Ascending aorta (tissue), 2 donors: ENCODE measurements at regions of chr2 and their contacts with region 1.

Region 1: GRCh38 chr2:237291138-237291792 is 122.7 kb downstream of the COL6A3 start:
- DNase-seq: peak; percentile 70 to 96
- H3K4me3 ChIP-seq: peak overlapping the region; percentile 2 to 37
- H3K27ac ChIP-seq: peak overlapping the region; percentile 75 to 76
- H3K4me1 ChIP-seq: peaks cover 0 to 22% of the 10 kb centered on the region in 2 donors
- H3K27me3 ChIP-seq: no peaks in the 10 kb centered on the region
- CTCF ChIP-seq: no peak

Region 2: GRCh38 chr2:237223201-237223861 is 67.9 kb before region 1 on chr2:
- intact Hi-C with region 1: loop called (anchors 5 kb)
- DNase-seq: peak; percentile 26 to 85
- H3K4me3 ChIP-seq: no peak overlapping the region
- H3K27ac ChIP-seq: peak overlapping the region; percentile 53 to 55
- H3K4me1 ChIP-seq: peaks cover 13 to 15% of the 10 kb centered on the region in 2 donors
- H3K27me3 ChIP-seq: no peaks in the 10 kb centered on the region
- CTCF ChIP-seq: no peak

Region 3: DNA sequence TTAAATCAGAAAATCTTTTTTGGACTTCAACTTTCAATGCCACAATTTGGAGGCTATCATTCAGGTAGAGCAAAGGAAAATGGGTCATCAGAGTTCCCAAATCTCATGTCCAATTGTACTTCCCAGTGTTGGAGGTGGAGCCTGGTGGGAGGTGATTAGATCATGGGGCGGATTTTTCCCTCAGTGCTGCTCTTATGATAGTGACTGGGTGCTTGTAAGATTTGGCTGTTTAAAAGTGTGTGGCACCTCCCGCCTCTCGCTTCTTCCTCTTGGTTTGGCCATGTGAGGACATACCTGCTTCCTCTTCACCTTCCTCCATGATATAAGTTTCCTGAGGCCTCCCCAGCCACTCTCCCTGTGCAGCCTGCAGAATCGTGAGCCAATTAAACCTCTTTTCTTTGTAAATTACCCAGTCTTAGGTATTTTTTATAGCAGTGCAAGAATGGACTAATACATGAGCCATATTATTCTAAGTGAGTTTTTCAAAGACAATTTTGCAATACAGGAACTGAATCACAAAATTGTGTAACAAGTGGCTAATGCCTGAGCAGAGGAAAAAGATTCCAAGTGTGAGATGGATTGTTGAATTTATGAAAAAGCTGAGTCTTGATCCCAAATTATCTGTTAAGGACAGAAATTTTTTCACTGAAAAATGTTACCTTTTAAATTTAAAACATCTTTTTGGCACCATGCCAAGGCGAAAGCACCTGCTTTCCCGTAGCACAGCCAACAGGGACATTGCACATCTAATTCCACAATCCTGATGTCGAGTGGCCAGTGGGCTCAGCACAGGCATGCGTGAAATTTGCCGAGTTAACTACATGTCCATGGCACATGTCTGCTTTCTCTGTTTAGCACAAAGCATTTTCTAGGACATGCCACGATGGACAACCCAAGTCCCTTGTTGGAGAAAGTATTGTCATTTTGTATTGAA is 28.2 kb before region 1 on chr2:
- intact Hi-C with region 1: loop called (anchors 2 kb)
- DNase-seq: no peak
- H3K4me3 ChIP-seq: no peak overlapping the region
- H3K27ac ChIP-seq: peak overlapping the region; percentile 1 to 43
- H3K4me1 ChIP-seq: peaks cover 0 to 13% of the 10 kb centered on the region in 2 donors
- H3K27me3 ChIP-seq: no peaks in the 10 kb centered on the region
- CTCF ChIP-seq: no peak

Region 4: GRCh38 chr2:237315170-237315828 is 24.0 kb after region 1 on chr2:
- intact Hi-C with region 1: loop called (anchors 1 kb)
- DNase-seq: peak; percentile 69 to 96
- H3K4me3 ChIP-seq: peak overlapping the region in 1 of 2 donors; percentile 26
- H3K27ac ChIP-seq: peak overlapping the region; percentile 95 to 99
- H3K4me1 ChIP-seq: peaks cover 19 to 31% of the 10 kb centered on the region in 2 donors
- H3K27me3 ChIP-seq: no peaks in the 10 kb centered on the region
- CTCF ChIP-seq: peak; percentile 43 to 77 (median 75)

Region 5: GRCh38 chr2:237354892-237355291 is 63.6 kb after region 1 on chr2:
- intact Hi-C with region 1: loop called (anchors 5 kb)
- DNase-seq: no peak
- H3K4me3 ChIP-seq: no peak overlapping the region
- H3K27ac ChIP-seq: peak overlapping the region; percentile 16 to 29
- H3K4me1 ChIP-seq: peaks cover 0 to 7% of the 10 kb centered on the region in 2 donors
- H3K27me3 ChIP-seq: no peaks in the 10 kb centered on the region
- CTCF ChIP-seq: no peak

Region 6: DNA sequence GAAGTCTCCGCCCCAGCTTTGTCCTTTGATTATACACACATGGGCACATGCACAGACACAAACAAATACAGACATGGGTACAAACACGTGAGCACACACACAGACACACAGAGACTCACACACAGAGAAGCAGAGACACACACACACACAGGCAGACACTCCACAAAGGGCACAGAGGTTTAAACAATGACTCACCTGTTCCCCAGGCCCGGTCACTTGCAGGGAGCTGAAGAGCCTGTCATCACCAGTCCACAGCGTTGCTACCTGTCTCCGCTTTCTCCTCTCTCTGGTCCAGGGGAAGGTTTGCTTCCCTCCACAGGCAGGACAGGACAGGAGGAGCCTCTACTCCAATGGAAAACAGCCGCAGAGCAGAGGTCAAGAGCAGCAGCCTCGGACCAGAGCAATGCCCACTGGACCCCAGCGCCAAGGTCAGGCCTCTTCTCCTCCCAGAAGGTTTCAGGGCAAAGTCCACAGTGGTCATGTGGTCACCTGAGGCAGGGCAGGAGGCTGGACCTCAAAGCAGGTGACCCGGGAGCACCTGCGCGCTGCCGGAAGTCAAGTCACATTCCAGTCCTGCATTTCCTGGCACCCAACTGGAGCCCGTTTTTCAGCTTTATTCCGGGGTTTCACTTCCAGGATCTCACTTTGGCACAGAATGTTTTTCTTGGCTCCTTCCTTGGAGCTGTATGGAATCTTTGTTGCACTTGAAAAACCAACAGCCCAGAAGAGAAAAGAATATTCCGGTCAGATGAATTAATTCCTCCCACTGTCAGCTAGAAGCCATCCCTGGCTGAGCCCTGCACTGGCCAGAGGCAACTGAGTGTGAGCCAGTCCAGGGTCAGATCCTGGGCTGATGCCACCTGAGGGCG is 299.2 kb after region 1 on chr2 and contains the start of gene RAB17:
- intact Hi-C with region 1: no loop called
- DNase-seq: no peak
- H3K4me3 ChIP-seq: no peak within 1 kb of the TSS
- H3K27ac ChIP-seq: peak within 1 kb of the TSS; percentile 35 to 66
- H3K4me1 ChIP-seq: peaks cover 15 to 36% of the 10 kb centered on the region in 2 donors
- H3K27me3 ChIP-seq: no peaks in the 10 kb centered on the region
- CTCF ChIP-seq: no peak
- total RNA-seq, gene RAB17: 0.32 TPM

Region 7: DNA sequence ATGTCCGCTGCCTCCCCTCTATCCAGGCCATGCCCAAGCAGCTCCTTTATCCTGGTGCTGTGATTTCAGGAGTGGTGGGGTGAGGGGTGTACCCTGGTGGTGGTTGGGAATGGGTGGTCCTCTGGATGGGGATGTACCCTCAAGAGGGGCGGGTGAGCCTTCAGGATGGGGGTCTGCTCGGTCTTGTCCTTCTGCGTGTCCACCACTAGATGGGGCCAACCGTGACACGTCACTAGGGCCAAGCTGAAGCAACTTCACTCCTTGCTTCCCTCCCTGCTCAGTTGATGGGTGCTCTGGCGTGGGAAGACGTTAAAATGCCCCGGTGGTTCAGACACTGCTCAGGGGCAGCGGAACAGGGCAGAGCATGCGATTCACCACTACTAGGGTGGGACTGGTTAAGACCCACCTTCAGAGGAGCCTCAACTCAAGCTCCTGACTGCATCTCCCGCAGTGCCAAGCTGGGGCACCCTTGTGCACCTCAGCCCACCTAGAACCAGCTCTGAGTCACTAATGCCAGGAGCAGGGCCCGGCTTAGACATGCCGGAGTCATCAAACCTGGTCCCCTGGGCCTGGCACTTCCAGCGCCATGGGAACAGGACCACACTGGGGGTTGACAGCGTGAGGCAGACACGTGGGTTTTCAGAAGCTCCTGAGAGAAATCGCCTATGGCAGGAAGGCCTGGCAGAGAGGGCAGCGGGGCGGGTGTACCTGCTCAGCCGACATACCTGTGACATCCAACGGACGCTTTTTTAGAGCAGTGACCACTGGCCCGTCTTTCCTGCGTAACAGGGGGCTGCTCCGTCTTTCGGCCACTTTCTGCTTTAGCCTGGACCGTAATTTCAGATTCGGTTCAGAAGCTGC is 1852.8 kb after region 1 on chr2:
- intact Hi-C with region 1: no loop called
- DNase-seq: no peak
- H3K4me3 ChIP-seq: no peak overlapping the region
- H3K27ac ChIP-seq: no peak overlapping the region
- H3K4me1 ChIP-seq: peaks cover 0 to 3% of the 10 kb centered on the region in 2 donors
- H3K27me3 ChIP-seq: no peaks in the 10 kb centered on the region
- CTCF ChIP-seq: peak; percentile 53 to 58 (median 54)